Naive thymus-derived CD8-positive, alpha-beta T cell (primary cell): ENCODE measurements at regions of chr10 and their contacts with region 1.

Region 1: GRCh38 chr10:79347226-79347893 is at the start of gene PPIF:
- DNase-seq: peak; percentile 82 to 93 (median 88)
- ATAC-seq: peak; percentile 89 to 91
- H3K4me3 Mint-ChIP-seq: peak within 1 kb of the TSS; percentile 73 to 90 (median 82)
- H3K27ac Mint-ChIP-seq: peak within 1 kb of the TSS; percentile 66 to 92 (median 89)
- H3K4me1 Mint-ChIP-seq: peaks cover 13 to 28% (median 25%) of the 10 kb centered on the region in 4 donors
- H3K27me3 Mint-ChIP-seq: no peaks in the 10 kb centered on the region
- polyA plus RNA-seq, gene PPIF: 7.9 to 10.9 (median 8.6) TPM

Region 2: DNA sequence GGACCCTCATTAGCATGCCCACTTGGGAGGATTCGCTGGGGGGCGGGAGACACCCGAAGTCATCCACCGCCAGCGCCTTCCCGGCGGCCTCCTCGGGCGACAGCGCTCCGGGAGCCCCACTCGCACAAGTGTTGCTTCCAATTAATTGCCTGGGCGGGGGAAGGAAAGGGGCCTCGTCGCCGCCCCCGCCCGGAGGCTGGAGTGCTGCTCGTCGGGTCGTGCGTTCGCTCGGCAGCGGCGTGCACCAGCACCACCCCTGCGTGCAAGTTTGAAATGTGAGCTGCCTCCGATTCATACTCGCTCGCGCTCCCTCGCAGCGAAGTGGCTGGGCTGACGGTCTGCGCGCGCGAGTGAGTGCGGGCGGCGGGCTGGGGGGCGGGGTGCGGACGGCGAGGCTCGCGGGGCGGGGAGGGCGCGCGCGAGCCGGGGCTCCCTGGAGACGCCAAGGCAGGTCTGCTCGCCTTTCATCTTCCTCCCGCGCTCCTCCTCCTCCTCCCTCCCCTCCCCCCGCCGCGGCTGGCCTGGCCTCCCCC is 104.7 kb before region 1 on chr10:
- POLR2A ChIA-PET with region 1: interaction called, 12 read pairs
- DNase-seq: peak in 9 of 10 donors; percentile 10 to 70 (median 29)
- ATAC-seq: peak; percentile 58 to 60
- H3K4me3 Mint-ChIP-seq: peak overlapping the region in 8 of 10 donors; percentile 22 to 79 (median 64)
- H3K27ac Mint-ChIP-seq: no peak overlapping the region
- H3K4me1 Mint-ChIP-seq: peaks cover 33 to 64% (median 37%) of the 10 kb centered on the region in 4 donors
- H3K27me3 Mint-ChIP-seq: peaks cover 0 to 7% (median 0%) of the 10 kb centered on the region in 5 donors

Region 3: DNA sequence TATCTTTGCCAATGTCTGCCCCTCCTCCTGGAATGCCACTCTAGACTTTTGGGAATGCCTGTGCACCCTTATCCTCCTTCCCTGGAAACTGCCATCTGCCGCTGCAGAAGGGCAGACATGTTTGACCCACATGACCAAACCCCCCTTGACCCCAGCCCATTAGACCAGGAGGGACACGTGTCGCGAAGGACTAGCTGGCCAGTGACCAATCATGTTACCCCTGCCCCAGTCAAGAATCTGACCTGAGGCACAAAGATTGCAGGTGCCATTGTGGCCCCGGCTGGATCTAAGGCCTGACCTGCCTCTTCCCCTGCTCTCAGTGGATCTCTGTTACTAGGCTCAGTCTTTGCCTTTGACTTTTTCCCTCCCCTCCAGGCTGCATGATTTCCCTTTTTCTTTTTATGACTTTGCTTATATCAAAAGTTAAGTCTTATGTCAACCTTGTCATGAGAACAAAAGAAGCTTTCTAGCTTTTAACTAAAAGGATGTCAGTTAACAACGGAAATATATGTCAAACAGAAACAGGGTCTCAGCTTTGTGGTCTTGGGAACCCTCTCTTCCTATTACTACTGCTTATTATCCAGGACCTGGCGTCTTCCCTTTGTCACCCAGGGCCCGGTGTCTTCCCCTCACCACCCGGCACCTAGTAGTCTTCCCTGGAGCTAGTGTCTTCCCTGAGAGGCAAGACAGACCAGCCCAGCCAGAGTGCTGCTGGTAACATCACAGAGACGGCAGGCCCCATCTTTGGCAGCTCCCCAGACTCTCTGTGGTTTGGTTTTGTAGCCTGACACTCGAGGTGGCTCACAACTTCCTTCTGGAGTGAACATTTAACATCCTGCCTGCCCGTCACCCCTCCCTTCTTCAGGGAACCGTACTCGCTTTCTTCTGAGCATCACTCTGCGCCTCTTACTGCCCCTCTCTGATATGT is 24.5 kb before region 1 on chr10:
- POLR2A ChIA-PET with region 1: interaction called, 41 read pairs
- DNase-seq: peak; percentile 51 to 94 (median 88)
- ATAC-seq: peak; percentile 97
- H3K4me3 Mint-ChIP-seq: peak overlapping the region; percentile 70 to 91 (median 82)
- H3K27ac Mint-ChIP-seq: peak overlapping the region; percentile 81 to 97 (median 94)
- H3K4me1 Mint-ChIP-seq: peaks cover 39 to 66% (median 58%) of the 10 kb centered on the region in 4 donors
- H3K27me3 Mint-ChIP-seq: no peaks in the 10 kb centered on the region

Region 4: DNA sequence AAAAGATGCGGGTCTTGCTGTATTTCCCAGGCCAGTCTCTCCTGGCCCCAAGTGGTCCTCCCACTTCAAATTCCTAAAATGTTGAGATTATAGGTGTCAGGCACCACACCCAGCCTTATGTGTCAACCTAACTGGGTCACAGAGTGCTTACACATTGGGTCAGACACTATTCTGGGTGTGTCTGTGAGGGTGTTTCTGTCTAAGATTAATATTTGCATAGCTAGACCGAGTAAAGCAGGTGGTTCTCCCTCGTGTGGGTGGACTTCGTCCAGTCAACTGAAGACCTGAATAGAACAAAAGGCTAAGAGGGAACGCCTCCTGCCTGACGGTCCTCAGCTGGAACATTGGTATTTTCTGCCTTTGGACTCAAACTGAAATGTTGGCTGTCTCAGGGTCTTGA is 11.4 kb after region 1 on chr10:
- POLR2A ChIA-PET with region 1: interaction called, 10 read pairs
- DNase-seq: no peak
- ATAC-seq: no peak
- H3K4me3 Mint-ChIP-seq: no peak overlapping the region
- H3K27ac Mint-ChIP-seq: no peak overlapping the region
- H3K4me1 Mint-ChIP-seq: peaks cover 10 to 28% (median 14%) of the 10 kb centered on the region in 4 donors
- H3K27me3 Mint-ChIP-seq: no peaks in the 10 kb centered on the region